Activated CD4-positive, alpha-beta memory T cell treated with anti-CD3 and anti-CD28 coated beads, Interleukin-2, amount 10 ng/mL, durations not matched to agents 7 days and 5 days (primary cell): ENCODE measurements at regions of chr14 and their contacts with region 1.

Region 1: GRCh38 chr14:20413045-20413799 is at the start of gene TEP1:
- DNase-seq: peak; percentile 81
- H3K4me3 Mint-ChIP-seq: peak within 1 kb of the TSS; percentile 97
- H3K27ac Mint-ChIP-seq: peak within 1 kb of the TSS; percentile 98
- H3K4me1 Mint-ChIP-seq: peaks cover 47% of the 10 kb centered on the region
- H3K27me3 Mint-ChIP-seq: no peaks in the 10 kb centered on the region
- total RNA-seq, gene TEP1: 60.7 to 63.5 TPM

Region 2: DNA sequence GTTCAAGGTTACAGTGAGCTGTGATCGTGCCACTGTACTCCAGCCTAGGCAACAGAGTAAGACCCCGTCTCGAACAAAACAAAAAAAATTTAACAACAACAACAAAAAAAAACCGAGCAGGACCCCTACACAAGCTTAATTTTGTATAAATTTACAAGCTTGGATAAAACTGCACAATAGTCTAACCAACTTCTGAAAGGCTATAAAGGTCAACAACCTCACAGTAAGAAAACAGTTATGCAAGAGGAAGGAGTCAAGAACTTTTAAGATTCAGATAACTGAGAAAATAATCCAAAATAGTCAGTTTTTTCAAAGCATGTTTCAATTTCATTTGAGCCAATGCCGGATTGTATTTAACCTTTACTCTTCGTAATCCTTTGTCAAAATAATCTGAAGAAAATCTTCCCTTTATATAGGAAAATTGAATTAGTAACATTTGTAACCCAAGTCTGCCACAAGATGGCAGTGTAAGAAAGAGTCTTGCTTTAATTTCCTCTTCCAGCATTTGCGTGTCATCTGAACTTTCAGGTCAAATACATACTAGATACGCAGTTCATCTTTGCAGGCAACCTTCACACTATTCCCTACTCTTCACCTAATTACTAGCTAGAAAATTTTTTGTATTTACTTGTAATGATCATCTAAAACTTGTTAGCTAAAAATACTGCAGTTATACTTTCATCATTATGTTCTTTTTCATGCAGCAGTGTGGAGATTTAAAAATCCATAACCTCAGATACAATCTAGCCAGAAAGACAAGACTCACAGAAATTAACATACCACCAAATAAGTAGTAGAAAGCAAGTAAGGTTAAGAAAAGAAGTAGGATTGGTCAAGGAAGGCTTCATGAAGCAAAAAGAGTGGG is 86.0 kb before region 1 on chr14:
- CTCF ChIA-PET with region 1: interaction called, 41 read pairs
- POLR2A ChIA-PET with region 1: interaction called, 3 read pairs
- DNase-seq: no peak
- H3K4me3 Mint-ChIP-seq: no peak overlapping the region
- H3K27ac Mint-ChIP-seq: peak overlapping the region; percentile 64
- H3K4me1 Mint-ChIP-seq: peaks cover 50% of the 10 kb centered on the region
- H3K27me3 Mint-ChIP-seq: no peaks in the 10 kb centered on the region

Region 3: GRCh38 chr14:20400965-20401593 is 12.1 kb before region 1 on chr14:
- CTCF ChIA-PET with region 1: interaction called, 13 read pairs
- POLR2A ChIA-PET with region 1: interaction called, 31 read pairs
- DNase-seq: peak; percentile 22
- H3K4me3 Mint-ChIP-seq: peak overlapping the region; percentile 61
- H3K27ac Mint-ChIP-seq: peak overlapping the region; percentile 91
- H3K4me1 Mint-ChIP-seq: peaks cover 42% of the 10 kb centered on the region
- H3K27me3 Mint-ChIP-seq: no peaks in the 10 kb centered on the region

Region 4: DNA sequence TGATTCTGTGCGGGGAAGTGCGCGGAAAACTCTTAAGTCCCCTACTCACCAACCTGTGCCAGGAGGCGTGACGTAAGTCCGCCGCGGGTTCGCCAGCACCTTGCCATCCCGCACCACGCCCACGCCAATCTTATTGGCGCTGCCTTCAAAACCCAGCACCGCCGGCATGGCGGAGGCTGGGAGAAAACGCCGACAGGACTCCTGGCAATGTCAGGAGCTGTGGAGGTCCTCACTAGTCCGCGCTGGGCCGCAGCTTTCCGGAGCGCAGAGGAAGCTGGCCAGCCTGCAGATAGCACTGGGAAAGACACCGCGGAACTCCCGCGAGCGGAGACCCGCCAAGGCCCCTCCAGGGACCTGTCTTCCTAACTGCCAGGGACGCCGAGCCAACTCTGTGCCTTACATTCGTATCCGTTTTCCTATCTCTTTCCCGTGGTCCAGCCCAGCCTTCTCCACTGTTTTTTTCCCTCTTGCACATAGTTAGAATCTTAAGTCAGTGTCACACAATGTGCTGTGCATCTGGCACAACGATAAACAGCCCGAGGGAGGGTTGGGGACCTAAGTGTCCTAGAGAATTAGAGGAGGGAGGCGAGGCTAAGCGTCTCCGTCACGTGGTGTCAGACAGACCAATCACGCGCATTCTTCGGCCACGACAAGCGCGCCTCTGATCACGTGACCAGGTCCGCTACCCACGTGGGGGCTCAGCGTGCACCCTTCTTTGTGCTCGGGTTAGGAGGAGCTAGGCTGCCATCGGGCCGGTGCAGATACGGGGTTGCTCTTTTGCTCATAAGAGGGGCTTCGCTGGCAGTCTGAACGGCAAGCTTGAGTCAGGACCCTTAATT is 41.5 kb after region 1 on chr14 and contains the starts of genes APEX1 and OSGEP:
- CTCF ChIA-PET with region 1: interaction called, 36 read pairs
- POLR2A ChIA-PET with region 1: interaction called, 41 read pairs
- DNase-seq: peak; percentile 99
- H3K4me3 Mint-ChIP-seq: no peak within 1 kb of the TSS
- H3K27ac Mint-ChIP-seq: no peak within 1 kb of the TSS
- H3K4me1 Mint-ChIP-seq: peaks cover 33% of the 10 kb centered on the region
- H3K27me3 Mint-ChIP-seq: no peaks in the 10 kb centered on the region
- total RNA-seq, gene APEX1: 91.9 to 103 TPM
- total RNA-seq, gene OSGEP: 35.8 to 40.3 TPM

Region 5: GRCh38 chr14:20469242-20469889 is 56.1 kb after region 1 on chr14 and contains the start of gene PNP:
- CTCF ChIA-PET with region 1: interaction called, 8 read pairs
- POLR2A ChIA-PET with region 1: interaction called, 18 read pairs
- DNase-seq: peak; percentile 91
- H3K4me3 Mint-ChIP-seq: peak within 1 kb of the TSS; percentile 88
- H3K27ac Mint-ChIP-seq: peak within 1 kb of the TSS; percentile 91
- H3K4me1 Mint-ChIP-seq: peaks cover 42% of the 10 kb centered on the region
- H3K27me3 Mint-ChIP-seq: no peaks in the 10 kb centered on the region
- total RNA-seq, gene PNP: 207 to 210 TPM